ENCODE measurements at regions of chr12 and their contacts with region 1.

Region 1: GRCh38 chr12:949453-950191 is at the start of gene RAD52:
- DNase-seq: peak; percentile 94
- H3K4me3 Mint-ChIP-seq: peak within 1 kb of the TSS; percentile 95
- H3K27ac Mint-ChIP-seq: peak within 1 kb of the TSS; percentile 92
- H3K4me1 Mint-ChIP-seq: peaks cover 26% of the 10 kb centered on the region
- H3K27me3 Mint-ChIP-seq: peaks cover 6% of the 10 kb centered on the region
- total RNA-seq, gene RAD52: 15.4 and 17.4 TPM in 2 replicates

Region 2: GRCh38 chr12:553205-554000 is 396.2 kb before region 1 on chr12:
- intact Hi-C with region 1: loop called (anchors 1 kb)
- DNase-seq: peak; percentile 70
- H3K4me3 Mint-ChIP-seq: peak overlapping the region; percentile 92
- H3K27ac Mint-ChIP-seq: peak overlapping the region; percentile 93
- H3K4me1 Mint-ChIP-seq: peaks cover 70% of the 10 kb centered on the region
- H3K27me3 Mint-ChIP-seq: peaks cover 4% of the 10 kb centered on the region

Region 3: DNA sequence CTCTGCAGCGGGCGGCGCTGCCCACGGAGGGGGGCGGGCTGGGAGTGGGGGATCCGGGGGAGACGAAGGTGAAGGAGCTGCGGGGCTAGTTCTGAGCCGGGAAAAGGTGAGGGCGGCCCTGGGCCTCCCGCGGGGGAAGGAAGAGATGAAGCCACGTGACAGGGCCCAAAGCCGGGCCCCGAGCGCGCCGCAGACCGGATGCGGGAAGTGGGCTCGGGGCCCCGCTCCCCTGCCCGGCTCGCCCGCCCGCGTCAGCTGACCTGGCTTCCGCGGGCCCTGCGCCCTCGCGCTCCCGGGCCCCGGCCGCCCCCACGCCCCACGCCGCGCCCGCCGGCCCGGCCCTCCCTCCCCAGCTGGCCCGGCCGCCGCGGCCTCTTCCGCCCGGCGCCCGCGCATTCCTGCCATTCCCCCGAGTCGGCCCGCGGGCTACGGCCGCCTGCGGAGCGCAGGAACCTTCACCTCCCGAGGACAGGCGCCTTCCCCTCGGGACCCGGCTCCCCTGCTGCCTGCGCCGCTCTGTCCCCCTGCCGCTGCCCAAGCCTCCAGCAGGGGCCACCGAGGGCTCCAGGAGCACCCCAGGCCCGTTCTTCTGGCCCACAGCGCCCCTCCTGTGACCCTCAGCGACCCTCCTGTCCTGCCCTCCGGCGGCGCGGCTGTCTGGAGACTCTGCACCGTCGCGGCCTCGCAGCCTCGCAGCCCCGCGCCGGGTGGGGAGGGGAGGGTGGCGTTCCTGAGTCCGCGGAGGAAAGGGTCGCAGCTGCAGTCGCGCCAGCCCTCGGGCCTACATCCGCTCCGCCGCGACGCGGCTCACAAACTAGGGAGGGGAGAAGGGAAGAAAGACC is 306.8 kb before region 1 on chr12:
- intact Hi-C with region 1: loop called (anchors 5 kb)
- DNase-seq: peak; percentile 78
- H3K4me3 Mint-ChIP-seq: peak overlapping the region; percentile 84
- H3K27ac Mint-ChIP-seq: peak overlapping the region; percentile 95
- H3K4me1 Mint-ChIP-seq: peaks cover 63% of the 10 kb centered on the region
- H3K27me3 Mint-ChIP-seq: no peaks in the 10 kb centered on the region

Region 4: DNA sequence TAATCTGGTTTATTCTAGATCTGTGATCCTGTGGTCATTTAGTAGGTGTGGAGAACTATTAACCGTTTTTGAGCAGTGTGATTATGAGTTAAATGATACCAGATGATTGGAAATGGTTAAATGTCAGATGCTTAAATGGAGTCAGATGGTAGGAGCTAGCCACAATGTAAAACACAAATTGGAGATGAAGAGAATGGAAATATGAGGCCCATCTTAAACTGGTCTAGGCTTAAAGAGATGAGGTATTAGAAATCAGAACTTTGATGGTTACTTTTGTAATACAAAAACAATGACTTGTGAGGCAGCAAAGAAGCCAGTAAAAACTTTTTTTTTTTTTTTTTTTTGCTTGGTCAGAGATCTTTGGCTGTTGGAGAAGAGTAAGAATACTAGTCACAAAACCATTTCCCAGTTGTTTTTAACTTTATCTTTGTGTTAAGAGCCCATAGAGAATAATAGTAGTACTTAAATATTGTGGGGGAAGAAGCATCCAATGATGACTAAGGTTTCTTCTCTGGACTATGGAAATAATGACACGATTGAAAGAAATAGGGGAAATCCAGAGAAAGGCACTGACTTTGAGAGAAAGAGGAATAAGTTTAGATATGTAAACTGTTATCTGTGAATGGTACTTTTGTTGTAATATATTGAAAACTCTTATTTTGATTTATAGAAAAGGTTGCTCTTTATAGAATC is 101.3 kb before region 1 on chr12:
- intact Hi-C with region 1: loop called (anchors 1 kb)
- DNase-seq: no peak
- H3K4me3 Mint-ChIP-seq: peak overlapping the region; percentile 13
- H3K27ac Mint-ChIP-seq: peak overlapping the region; percentile 81
- H3K4me1 Mint-ChIP-seq: peaks cover 52% of the 10 kb centered on the region
- H3K27me3 Mint-ChIP-seq: no peaks in the 10 kb centered on the region

Region 5: DNA sequence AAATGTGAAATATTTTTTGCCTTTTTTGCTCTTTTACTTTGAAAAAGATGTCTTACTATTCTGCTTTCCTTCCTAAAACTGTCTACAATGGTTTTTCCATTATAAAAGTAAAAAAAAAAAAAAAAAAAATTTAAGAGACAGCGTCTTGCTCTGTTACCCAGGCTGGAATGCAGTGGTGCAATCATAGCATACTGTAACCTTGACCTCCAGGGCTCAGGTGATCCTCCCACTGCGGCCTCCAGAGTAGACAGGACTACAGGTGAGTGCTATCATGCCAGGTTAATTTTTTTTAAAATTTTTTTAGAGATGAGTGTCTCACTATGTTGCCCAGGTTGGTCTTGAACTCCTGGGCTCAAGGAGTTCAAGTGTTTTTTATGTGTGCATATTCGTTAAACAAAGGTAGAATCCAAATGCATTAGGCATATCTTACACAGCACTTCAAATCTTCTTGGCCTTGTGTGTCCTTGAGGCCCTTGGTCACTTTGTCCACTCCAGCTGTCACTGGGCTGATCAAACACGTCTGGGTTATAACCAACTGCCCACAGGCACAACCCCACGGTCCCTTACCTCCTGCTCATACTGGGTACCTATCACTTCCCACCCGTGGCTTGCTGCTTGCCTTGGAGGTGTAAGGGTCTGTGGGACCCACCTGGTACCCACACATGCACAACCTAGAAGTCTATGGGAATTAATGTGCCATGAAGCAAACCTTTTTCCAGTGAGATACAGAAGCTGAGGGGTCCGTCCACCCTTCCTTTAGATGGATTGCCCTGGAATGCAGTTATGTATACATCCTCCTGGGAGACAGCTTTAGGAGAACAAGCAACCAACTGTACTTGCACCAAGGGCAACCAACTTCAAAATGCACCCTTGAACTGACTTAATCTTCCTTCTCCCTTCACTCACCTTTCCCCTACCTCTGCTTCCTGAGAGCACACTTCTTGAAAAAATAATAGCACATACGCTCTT is 13.0 kb before region 1 on chr12:
- intact Hi-C with region 1: no loop called
- DNase-seq: no peak
- H3K4me3 Mint-ChIP-seq: no peak overlapping the region
- H3K27ac Mint-ChIP-seq: no peak overlapping the region
- H3K4me1 Mint-ChIP-seq: no peaks in the 10 kb centered on the region
- H3K27me3 Mint-ChIP-seq: no peaks in the 10 kb centered on the region

Region 6: DNA sequence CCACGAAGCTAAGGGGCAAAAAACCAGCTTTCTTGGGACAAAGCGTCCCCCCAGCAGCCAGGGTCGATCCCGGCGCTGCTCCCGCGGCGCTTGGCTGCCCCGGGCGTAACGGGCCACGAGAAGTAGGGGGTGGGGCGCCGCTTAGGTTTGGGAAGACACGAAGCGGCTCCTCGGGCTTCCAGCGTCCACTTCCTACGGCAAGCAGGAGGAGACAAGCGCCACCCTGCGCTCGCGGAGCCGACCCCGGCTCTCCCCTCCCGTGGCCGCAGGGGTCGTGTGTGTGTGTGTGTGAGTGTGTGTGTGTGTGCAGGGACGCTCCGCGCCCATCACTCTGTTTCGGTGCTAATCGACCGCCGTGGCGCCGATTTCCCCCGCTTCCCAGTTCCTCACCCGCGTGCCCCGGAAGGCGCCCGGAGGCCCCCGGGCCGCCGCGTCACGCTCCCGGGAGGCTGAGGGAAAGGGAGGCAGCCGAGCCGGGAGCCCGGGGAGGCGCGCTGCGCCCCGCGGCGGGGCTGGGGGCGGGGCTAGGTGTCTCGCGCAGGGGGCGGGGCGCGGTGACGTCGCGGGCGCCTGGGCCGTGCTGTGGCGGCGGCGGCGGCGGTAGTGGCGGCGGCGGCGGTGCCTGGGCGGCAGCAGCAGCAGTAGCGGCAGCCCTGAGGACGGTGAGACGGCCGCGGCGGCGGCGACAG is 41.2 kb after region 1 on chr12 and contains the start of gene ERC1:
- intact Hi-C with region 1: loop called (anchors 1 kb)
- DNase-seq: peak; percentile 82
- H3K4me3 Mint-ChIP-seq: peak within 1 kb of the TSS; percentile 91
- H3K27ac Mint-ChIP-seq: peak within 1 kb of the TSS; percentile 88
- H3K4me1 Mint-ChIP-seq: peaks cover 35% of the 10 kb centered on the region
- H3K27me3 Mint-ChIP-seq: peaks cover 7% of the 10 kb centered on the region
- total RNA-seq, gene ERC1: 33.6 and 34.3 TPM in 2 replicates

Region 7: GRCh38 chr12:1234073-1234472 is 284.5 kb after region 1 on chr12:
- intact Hi-C with region 1: no loop called
- DNase-seq: no peak
- H3K4me3 Mint-ChIP-seq: no peak overlapping the region
- H3K27ac Mint-ChIP-seq: no peak overlapping the region
- H3K4me1 Mint-ChIP-seq: no peaks in the 10 kb centered on the region
- H3K27me3 Mint-ChIP-seq: peaks cover 1% of the 10 kb centered on the region

Region 8: GRCh38 chr12:1690578-1691122 is 741.0 kb after region 1 on chr12 and contains the start of gene ADIPOR2:
- intact Hi-C with region 1: loop called (anchors 10 kb)
- DNase-seq: peak; percentile 93
- H3K4me3 Mint-ChIP-seq: peak within 1 kb of the TSS; percentile 99
- H3K27ac Mint-ChIP-seq: peak within 1 kb of the TSS; percentile 96
- H3K4me1 Mint-ChIP-seq: peaks cover 50% of the 10 kb centered on the region
- H3K27me3 Mint-ChIP-seq: peaks cover 3% of the 10 kb centered on the region
- total RNA-seq, gene ADIPOR2: 69.4 and 75.2 TPM in 2 replicates

Measured in activated T-helper 1 cell treated with anti-CD3 and anti-CD28 coated beads, Interleukin-12 subunit alpha, Interleukin-12 subunit beta, Interleukin-2, Interleukin-4 antibody, amounts not matched to agents 30 ng/mL and 10 ng/mL and 1 ng/mL, durations not matched to agents 14 hours and 24 hours and 36 hours (primary cell).